ENCODE measurements at regions of chr9 and their contacts with region 1.

Region 1: DNA sequence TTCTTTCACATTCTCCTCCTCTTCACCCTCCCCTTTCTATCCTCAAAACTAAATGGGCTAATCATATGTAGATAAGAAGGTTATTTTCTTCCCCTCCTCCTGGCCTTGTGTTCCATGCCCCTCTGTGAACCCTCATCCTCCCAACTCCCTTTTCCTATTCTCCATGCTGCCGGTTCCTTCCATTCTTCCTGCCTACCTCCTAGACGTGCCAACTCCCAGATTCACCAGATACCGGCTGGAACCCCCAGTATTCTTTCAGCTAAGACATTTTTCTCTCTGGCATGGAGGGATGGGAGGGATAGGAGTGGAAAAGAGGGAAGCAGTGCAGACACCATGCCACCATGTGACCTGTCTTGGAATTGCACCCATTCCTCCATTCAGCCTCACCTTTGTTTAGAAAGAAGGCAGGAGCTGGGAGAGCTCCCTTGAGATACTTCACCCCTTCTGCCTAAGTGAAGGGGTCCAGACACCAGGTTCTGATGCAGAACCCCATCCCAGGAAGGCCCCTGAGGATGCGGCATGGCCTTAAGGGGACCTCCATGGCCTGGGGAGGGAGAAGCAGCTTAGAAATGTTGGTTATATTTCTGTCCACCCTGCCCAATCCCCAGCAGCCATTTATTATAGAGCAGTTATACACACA is 4.8 kb downstream of the DNAJB5 start:
- DNase-seq: peak in 1 of 2 donors; percentile 72
- H3K4me3 ChIP-seq: peak overlapping the region; percentile 24 to 57
- H3K27ac ChIP-seq: peak overlapping the region; percentile 98 to 100
- H3K4me1 ChIP-seq: peaks cover 19 to 48% of the 10 kb centered on the region in 2 donors
- H3K27me3 ChIP-seq: no peaks in the 10 kb centered on the region
- CTCF ChIP-seq: peak; percentile 49 to 59 (median 54)

Region 2: GRCh38 chr9:33816327-33817252 is 1177.8 kb before region 1 on chr9 and contains the start of gene UBE2R2:
- intact Hi-C with region 1: loop called (anchors 10 kb)
- DNase-seq: peak; percentile 68 to 95
- H3K4me3 ChIP-seq: peak within 1 kb of the TSS; percentile 85 to 95
- H3K27ac ChIP-seq: peak within 1 kb of the TSS; percentile 99 to 100
- H3K4me1 ChIP-seq: peaks cover 0 to 25% of the 10 kb centered on the region in 2 donors
- H3K27me3 ChIP-seq: no peaks in the 10 kb centered on the region
- CTCF ChIP-seq: no peak
- total RNA-seq, gene UBE2R2: 7.2 TPM

Region 3: GRCh38 chr9:34458013-34458958 is 536.1 kb before region 1 on chr9 and contains the starts of genes DNAI1 and FAM219A:
- intact Hi-C with region 1: loop called (anchors 5 kb)
- DNase-seq: peak; percentile 95 to 99
- H3K4me3 ChIP-seq: peak within 1 kb of the TSS; percentile 79 to 94
- H3K27ac ChIP-seq: peak within 1 kb of the TSS; percentile 76 to 88
- H3K4me1 ChIP-seq: peaks cover 0 to 28% of the 10 kb centered on the region in 2 donors
- H3K27me3 ChIP-seq: no peaks in the 10 kb centered on the region
- CTCF ChIP-seq: no peak
- total RNA-seq, gene DNAI1: not detected
- total RNA-seq, gene FAM219A: 26.8 TPM

Region 4: GRCh38 chr9:34701769-34702736 is 292.3 kb before region 1 on chr9:
- intact Hi-C with region 1: loop called (anchors 5 kb)
- DNase-seq: peak; percentile 20 to 92
- H3K4me3 ChIP-seq: peak overlapping the region; percentile 59 to 73
- H3K27ac ChIP-seq: peak overlapping the region; percentile 87 to 91
- H3K4me1 ChIP-seq: no peaks in the 10 kb centered on the region
- H3K27me3 ChIP-seq: no peaks in the 10 kb centered on the region
- CTCF ChIP-seq: peak; percentile 91 to 99 (median 98)

Region 5: GRCh38 chr9:34884732-34885131 is 109.6 kb before region 1 on chr9:
- intact Hi-C with region 1: no loop called
- DNase-seq: no peak
- H3K4me3 ChIP-seq: no peak overlapping the region
- H3K27ac ChIP-seq: no peak overlapping the region
- H3K4me1 ChIP-seq: no peaks in the 10 kb centered on the region
- H3K27me3 ChIP-seq: no peaks in the 10 kb centered on the region
- CTCF ChIP-seq: no peak

Region 6: DNA sequence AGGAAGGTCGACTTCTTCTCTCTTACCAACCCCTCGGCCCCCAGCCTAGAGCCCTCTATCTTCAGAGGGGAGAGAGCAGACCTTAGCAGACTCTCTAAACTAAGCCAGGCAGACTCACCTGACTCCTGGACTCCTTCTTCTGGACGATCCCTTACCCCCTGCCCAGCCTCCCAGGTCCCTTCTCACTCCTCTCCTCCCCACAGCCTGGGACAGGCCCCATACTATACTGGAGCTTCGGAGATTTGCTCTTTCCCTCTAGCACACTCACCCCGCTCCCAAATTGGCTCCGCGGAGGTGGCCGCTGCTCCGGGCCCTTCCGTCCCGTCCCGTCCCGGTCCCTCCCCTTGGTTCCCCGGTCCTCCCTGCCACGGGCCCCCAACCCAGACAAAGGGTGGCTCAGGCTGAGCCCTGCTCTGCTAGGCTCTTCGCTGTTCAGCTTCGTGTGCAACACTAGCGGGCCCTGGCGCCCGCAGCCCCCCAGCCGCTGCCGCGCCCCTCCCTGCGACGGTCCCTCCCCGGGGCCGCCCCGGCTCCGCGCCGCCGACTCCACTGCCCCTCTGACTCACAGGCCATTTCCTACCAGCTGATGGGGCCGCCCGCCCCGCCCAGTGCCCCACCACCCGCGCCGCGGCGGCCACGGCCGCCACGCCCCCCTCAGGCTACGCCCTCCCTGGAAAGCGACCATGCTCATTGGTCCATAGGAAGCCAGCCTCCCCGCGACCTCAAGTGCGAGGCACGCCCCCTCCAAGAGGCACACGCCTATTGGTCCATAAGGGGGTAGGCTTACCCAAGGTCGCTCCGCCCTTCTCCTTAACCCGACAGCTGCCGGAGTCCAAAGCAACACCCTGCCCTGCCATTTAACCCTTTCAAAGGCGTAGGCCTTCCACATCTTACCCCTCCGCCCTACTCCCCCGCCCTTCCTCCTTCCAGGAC is 116.9 kb after region 1 on chr9:
- intact Hi-C with region 1: loop called (anchors 1 kb)
- DNase-seq: peak; percentile 95 to 99
- H3K4me3 ChIP-seq: peak overlapping the region; percentile 87 to 92
- H3K27ac ChIP-seq: peak overlapping the region; percentile 98 to 99
- H3K4me1 ChIP-seq: peaks cover 16 to 39% of the 10 kb centered on the region in 2 donors
- H3K27me3 ChIP-seq: no peaks in the 10 kb centered on the region
- CTCF ChIP-seq: no peak

Region 7: DNA sequence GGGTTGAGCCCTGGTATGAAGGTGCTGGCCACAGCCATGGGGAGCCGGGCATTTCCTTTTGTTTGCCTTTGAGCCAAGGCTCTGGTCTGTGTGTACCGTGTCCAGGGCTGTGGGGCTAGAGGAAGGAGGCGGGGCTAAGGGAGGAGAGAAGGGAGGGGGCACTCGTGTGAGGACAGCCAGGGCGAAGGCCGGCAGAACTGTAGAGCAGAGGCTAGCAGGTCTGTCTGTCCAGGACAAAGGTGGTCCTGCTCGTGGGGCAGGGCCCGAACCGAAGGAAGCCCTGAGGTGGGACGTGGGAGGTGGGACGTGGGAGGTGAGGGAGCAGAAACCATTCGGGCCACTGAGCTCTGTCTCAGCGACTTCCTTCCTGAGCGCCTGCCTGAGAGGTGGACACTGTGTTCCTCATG is 569.4 kb after region 1 on chr9:
- intact Hi-C with region 1: loop called (anchors 10 kb)
- DNase-seq: peak in 1 of 2 donors; percentile 85
- H3K4me3 ChIP-seq: peak overlapping the region; percentile 17 to 19
- H3K27ac ChIP-seq: peak overlapping the region; percentile 83 to 94
- H3K4me1 ChIP-seq: peaks cover 23 to 52% of the 10 kb centered on the region in 2 donors
- H3K27me3 ChIP-seq: no peaks in the 10 kb centered on the region
- CTCF ChIP-seq: no peak

Measured in ascending aorta (tissue), 2 donors.